Posterior vena cava (tissue), 2 donors: ENCODE measurements at regions of chr7 and their contacts with region 1.

Region 1: DNA sequence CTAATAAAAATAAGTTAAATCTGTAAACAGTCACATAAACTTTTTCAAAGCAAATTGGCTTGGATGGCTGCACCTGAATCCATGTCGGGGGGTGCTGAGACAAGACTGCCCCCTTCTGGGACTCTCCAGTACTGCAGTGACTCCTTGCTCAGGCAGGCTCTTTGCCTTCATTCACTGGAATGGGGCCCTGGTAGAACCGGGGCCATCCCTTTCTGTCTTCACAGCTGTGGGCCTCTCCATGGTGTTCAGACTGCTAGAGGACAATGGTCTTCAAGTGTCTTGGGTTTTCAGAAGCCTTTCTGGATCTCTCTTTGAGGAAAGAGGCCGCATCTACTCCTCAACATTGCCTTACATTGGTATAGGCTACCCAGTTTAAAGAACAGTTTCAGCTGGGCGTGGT is 16.1 kb upstream of the IMPDH1 start:
- DNase-seq: no peak

Region 2: GRCh38 chr7:128398016-128398840 is 27.6 kb before region 1 on chr7:
- intact Hi-C with region 1: loop called in 1 of 2 experiments (anchors 2 kb)
- DNase-seq: peak; percentile 84

Region 3: GRCh38 chr7:128455551-128456254 is 29.9 kb after region 1 on chr7 and contains the start of gene HILPDA:
- intact Hi-C with region 1: loop called (anchors 2 to 5 kb)
- DNase-seq: peak; percentile 99
- total RNA-seq, gene HILPDA: 12.8 to 18.1 TPM

Region 4: DNA sequence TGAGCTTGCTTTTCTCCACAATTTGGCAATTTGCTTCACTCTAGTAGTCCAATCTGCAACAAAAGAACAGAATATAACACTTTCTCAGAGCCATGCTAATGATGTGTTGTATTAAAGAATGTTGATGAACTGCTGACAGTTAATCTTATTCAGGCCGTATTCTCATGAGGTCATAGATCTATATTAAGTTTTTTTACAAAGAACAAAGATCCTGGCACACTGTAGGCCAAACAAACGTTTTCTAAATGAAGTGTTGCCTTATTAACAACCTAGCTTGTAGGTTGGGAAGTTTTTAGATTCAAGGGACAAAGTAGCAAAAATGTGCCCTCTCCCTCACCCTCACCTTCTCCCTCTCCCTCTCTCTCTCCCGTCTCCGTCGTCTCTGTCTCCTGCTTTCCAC is 36.6 kb after region 1 on chr7:
- intact Hi-C with region 1: loop called (anchors 2 to 5 kb)
- DNase-seq: no peak

Region 5: DNA sequence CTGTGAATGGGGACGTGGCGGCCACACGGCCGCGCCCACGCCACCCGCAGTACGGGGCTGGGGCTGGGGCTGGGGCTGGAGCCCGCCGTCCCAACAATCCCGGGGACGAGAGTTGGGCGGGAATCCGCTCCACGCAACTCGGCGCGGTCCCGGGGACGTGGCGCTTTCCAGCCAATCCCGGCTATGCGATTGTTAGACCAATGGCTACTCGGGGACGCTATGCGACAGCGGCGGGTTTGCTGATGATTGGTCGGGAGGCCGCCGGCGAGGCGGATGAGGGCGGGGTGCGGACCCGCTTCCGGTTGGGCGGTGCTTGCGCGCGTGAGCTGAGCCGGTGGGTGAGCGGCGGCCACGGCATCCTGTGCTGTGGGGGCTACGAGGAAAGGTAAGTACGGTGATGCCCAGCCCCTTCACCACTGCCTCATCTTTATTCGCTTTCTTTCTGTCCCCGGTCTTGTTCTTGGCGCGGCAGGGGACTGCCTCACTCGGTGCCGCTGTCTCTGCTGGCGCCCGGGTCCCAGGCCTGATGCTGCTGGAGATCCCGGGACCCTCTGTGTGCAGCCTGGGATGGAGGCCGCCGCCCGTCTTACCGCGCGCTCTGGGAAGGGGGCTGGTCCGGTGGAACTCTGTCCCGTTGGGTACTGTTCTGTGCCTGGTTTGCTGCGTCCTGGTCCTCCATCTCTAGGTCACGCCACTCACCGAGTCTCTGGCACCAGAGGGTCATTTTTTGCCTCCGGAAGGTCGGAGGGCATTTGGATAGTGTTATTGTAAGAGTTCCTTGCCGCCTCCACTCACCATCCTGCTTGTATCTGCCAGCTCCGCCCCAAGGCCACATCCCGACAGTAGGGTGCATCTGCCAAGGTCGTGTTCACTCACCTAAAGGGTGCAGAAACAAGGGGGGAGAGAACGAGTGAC is 313.5 kb after region 1 on chr7 and contains the start of gene CALU:
- intact Hi-C with region 1: no loop called
- DNase-seq: peak; percentile 99
- total RNA-seq, gene CALU: 262 to 393 TPM